ENCODE measurements at regions of chr14 and their contacts with region 1.

Region 1: GRCh38 chr14:23588884-23589598 is 10.5 kb upstream of the JPH4 start:
- DNase-seq: peak; percentile 64
- H3K4me3 Mint-ChIP-seq: no peak overlapping the region
- H3K27ac Mint-ChIP-seq: no peak overlapping the region
- H3K4me1 Mint-ChIP-seq: no peaks in the 10 kb centered on the region
- H3K27me3 Mint-ChIP-seq: peaks cover 15% of the 10 kb centered on the region

Region 2: DNA sequence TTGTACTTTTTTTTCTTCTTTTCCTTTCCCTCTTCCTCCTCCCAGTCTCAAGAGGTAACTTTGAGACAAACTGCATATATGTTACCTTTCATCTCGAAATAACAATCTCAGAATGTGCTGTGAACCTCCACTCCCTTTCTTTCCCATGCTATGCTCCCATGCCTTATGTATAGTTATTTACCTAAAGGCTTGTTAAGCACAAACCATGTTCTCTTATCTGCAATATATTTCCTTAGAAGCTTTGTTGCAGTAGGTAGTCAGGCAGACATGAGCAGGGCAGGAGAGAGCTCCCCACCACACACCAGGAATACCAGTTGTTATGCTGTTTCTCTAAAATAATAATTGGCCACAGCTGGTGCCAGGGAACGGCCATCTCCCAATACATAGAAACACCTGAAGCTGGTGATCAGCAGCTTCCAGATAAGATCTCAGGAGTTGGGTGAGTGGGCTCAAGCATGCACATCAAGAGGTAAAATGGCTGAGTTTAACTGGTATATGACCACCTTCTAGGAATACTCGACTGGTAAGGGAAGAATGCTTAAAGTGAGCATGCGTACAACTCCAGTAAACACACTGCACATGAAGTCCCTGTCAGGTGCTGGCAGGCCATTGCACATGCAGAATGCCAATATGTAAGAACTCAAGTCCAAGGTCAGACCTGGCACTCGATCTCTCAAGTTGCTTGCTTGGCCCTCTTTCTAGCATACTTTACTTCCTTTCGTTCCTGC is 32.3 kb after region 1 on chr14:
- intact Hi-C with region 1: no loop called
- DNase-seq: no peak
- H3K4me3 Mint-ChIP-seq: no peak overlapping the region
- H3K27ac Mint-ChIP-seq: no peak overlapping the region
- H3K4me1 Mint-ChIP-seq: peaks cover 5% of the 10 kb centered on the region
- H3K27me3 Mint-ChIP-seq: peaks cover 9% of the 10 kb centered on the region

Region 3: DNA sequence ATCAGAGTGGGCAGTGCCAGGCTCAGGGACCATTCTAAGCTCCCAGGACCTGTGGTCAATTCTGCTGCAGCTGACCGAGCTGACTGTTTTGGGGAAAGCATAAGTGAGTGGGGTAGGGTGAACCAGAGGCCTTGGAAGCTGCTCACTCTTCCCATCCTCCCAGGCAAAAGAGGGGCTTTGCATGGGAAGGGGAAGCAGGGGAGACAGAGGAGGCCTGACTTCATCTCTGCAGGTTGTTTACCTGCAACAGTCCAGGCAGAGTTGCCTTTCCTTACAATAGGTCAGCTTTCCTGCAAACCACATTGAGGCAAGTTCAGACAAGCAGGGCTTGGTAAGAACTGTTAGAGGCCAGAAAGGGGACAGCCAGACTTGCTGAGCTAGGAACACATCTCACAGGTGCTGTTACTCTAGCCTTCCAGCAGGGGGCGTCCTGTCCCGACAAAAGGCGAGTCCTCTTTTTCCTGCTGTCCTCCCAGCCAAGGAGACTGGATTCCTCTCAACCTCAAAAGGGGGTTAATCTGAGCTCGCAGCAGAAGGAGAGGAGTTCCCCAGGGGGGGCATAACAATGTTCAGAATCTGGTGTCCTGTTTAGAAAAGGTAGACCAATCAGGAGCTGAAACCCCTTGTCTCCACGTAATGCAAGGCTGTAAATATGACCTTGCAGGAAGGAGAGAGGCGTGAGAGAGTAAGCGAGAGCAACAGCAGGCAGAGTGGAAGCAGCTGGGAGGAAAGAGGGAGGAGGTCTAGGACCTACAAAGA is 42.8 kb after region 1 on chr14:
- intact Hi-C with region 1: loop called (anchors 1 kb)
- DNase-seq: peak; percentile 52
- H3K4me3 Mint-ChIP-seq: no peak overlapping the region
- H3K27ac Mint-ChIP-seq: peak overlapping the region; percentile 0
- H3K4me1 Mint-ChIP-seq: peaks cover 15% of the 10 kb centered on the region
- H3K27me3 Mint-ChIP-seq: peaks cover 4% of the 10 kb centered on the region

Region 4: DNA sequence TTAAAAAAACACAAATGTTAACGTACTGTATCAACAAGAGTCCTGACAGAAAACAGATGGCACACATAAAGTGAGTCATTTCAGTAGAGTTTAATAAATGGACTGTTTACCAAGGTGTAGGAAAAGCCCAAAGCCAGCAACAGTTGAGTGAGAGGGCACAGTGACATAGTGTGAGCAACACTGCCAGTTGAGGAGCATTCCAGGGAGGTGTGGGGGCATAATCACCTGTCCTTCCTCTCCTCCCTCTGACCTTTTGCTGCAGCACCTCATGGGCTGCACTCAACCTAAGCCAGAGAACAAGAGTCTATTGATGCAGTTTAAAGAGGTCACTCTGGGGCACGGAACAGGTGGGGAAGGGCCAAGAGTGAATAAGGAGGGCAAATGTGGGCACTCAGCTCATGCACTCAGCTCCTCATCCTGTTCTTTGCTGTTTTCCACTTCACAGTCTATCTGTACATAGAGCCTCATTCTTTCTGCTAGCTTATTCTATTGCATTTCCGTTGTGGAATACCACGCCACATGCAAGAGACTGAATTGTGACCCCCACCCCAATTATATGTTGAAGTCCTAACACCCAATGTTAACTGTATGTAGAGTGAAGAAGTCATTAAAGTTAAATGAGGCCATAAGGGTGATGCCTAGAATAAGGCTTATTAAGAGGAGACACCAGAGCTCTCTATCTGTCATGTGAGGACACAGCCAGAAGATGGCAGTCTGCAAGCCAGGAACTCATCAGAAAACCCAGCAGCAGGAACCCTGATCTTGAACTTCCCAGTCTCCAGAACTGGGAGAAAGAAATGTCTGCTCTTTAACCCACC is 76.5 kb after region 1 on chr14:
- intact Hi-C with region 1: loop called (anchors 2 kb)
- DNase-seq: no peak
- H3K4me3 Mint-ChIP-seq: no peak overlapping the region
- H3K27ac Mint-ChIP-seq: no peak overlapping the region
- H3K4me1 Mint-ChIP-seq: no peaks in the 10 kb centered on the region
- H3K27me3 Mint-ChIP-seq: peaks cover 3% of the 10 kb centered on the region

Region 5: GRCh38 chr14:23727566-23728335 is 138.7 kb after region 1 on chr14:
- intact Hi-C with region 1: loop called (anchors 5 kb)
- DNase-seq: no peak
- H3K4me3 Mint-ChIP-seq: no peak overlapping the region
- H3K27ac Mint-ChIP-seq: no peak overlapping the region
- H3K4me1 Mint-ChIP-seq: no peaks in the 10 kb centered on the region
- H3K27me3 Mint-ChIP-seq: no peaks in the 10 kb centered on the region

Region 6: GRCh38 chr14:23910101-23910875 is 321.2 kb after region 1 on chr14:
- intact Hi-C with region 1: loop called (anchors 5 kb)
- DNase-seq: no peak
- H3K4me3 Mint-ChIP-seq: no peak overlapping the region
- H3K27ac Mint-ChIP-seq: no peak overlapping the region
- H3K4me1 Mint-ChIP-seq: peaks cover 7% of the 10 kb centered on the region
- H3K27me3 Mint-ChIP-seq: no peaks in the 10 kb centered on the region

Region 7: DNA sequence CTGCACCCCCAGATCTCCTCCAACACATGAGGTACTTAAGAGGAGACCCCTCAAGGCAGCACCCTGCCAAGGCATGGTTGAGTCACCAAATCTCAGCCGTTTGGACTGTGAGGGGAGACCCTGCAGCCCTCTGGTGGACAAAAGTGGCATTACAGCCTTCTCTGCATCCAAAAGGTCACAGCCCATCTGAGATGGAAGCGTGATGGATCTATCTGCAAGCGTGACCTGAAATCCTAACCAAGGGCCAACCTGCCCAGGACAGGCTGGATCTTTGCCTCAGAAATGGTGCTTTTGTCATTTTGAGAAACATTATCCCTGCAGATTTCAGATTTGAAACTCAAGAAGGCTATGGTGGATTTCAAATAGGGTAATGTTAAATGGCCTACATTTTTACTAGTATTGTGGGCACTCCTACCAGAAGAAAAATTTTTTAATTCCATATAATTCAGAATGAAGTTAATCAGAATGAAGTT is 340.8 kb after region 1 on chr14:
- intact Hi-C with region 1: loop called (anchors 1 kb)
- DNase-seq: peak; percentile 63
- H3K4me3 Mint-ChIP-seq: no peak overlapping the region
- H3K27ac Mint-ChIP-seq: no peak overlapping the region
- H3K4me1 Mint-ChIP-seq: no peaks in the 10 kb centered on the region
- H3K27me3 Mint-ChIP-seq: peaks cover 7% of the 10 kb centered on the region

Measured in activated T-helper 2 cell treated with anti-CD3 and anti-CD28 coated beads, Interferon-gamma antibody, Interleukin-2, Interleukin-4, amounts not matched to agents 10 μg/mL and 5 μg/mL and 100 μg/mL, durations not matched to agents 14 hours and 24 hours and 36 hours (primary cell).